Aorta (tissue), 5 donors: ENCODE measurements at regions of chr15 and their contacts with region 1.

Region 1: GRCh38 chr15:60605879-60606304 is 127.0 kb upstream of the ICE2 start:
- DNase-seq: no peak
- ATAC-seq: no peak
- H3K4me3 ChIP-seq: peak overlapping the region in 1 of 2 donors; percentile 41
- H3K27ac ChIP-seq: no peak overlapping the region
- H3K4me1 ChIP-seq: peaks cover 0 to 2% of the 10 kb centered on the region in 2 donors
- H3K27me3 ChIP-seq: no peaks in the 10 kb centered on the region

Region 2: DNA sequence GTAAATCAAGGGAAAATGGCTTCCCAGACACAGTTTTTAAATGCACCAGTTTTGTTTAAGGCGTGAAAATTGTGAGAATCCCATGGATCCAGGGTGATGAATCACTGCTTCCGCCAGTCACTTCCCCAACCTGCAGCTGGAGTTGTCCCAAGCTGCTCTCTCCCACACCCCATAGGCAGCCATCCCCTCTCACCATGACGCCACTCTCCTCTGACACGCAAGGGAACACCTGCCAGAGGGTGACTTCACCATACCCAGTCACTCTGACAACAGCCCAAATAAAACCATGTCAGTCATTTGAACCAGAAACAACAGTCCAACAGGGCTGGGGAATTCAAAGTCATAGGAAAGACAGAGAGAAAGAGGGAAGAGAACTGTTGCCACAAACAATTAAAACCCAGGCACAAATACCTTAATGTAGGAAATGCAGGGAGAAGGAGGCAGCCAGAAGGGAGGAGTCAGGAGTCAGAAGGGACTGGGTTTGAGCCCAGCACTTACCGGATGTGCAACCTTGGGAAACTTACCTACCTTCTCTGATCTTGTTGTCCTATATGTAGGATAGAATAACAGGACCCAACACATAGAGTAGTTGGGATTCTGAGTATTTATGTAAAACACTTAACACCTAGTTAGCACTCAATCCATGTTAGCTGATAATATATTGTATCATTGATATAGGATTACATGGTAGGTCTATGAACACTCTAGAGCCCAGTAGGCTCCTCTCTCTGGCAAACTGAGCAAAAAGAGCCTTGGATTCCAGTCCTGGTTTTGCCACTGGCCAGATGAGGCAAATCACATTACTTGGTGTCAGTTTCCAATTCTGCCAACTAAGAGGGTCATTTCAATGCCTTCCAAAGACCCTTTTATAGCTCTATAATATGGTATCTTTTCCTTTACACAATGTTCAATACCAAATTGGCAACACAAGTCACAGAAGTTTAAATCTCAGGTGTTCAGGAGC is 199.4 kb after region 1 on chr15:
- intact Hi-C with region 1: loop called in 1 of 2 experiments (anchors 5 kb)
- DNase-seq: peak; percentile 72 to 90
- ATAC-seq: peak; percentile 64
- H3K4me3 ChIP-seq: no peak overlapping the region
- H3K27ac ChIP-seq: no peak overlapping the region
- H3K4me1 ChIP-seq: peaks cover 8 to 12% of the 10 kb centered on the region in 2 donors
- H3K27me3 ChIP-seq: no peaks in the 10 kb centered on the region

Region 3: GRCh38 chr15:60933900-60934895 is 328.3 kb after region 1 on chr15:
- intact Hi-C with region 1: no loop called
- DNase-seq: no peak
- ATAC-seq: no peak
- H3K4me3 ChIP-seq: no peak overlapping the region
- H3K27ac ChIP-seq: no peak overlapping the region
- H3K4me1 ChIP-seq: peaks cover 1 to 2% of the 10 kb centered on the region in 2 donors
- H3K27me3 ChIP-seq: no peaks in the 10 kb centered on the region